Posterior vena cava (tissue), 2 donors: ENCODE measurements at regions of chr2 and their contacts with region 1.

Region 1: DNA sequence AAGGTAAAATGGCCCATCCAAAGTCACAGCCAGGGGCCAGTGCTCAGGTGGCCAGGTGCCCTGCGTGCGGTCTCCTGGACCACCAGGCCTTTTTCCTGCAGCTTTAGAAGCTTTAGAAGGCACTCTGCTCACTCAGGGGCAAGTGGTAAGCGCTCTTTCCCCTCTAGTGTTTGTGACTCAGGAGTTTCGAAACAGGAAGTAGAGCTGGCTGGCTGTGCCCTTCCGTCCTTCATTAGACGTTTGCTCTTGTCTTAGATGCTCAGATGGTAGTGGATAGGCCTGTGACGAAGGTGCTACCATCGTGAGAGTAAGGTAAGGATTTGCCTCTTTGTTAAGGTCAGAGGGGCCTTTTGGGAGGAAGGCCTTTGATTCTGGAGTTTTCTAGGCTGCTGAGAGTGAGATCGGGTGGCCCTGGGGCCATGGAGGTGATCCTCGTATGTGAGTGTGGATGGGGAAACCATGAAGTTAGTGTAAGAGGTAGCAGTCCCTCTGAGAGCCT is at the start of gene CASP8:
- DNase-seq: no peak
- total RNA-seq, gene CASP8: 11.3 to 14.8 TPM

Region 2: GRCh38 chr2:199819746-199820145 is 1440.6 kb before region 1 on chr2:
- intact Hi-C with region 1: loop called in 1 of 2 experiments (anchors 10 kb)
- DNase-seq: no peak